Activated naive CD4-positive, alpha-beta T cell treated with anti-CD3 and anti-CD28 coated beads, Interleukin-2, amount 10 ng/mL, durations not matched to agents 7 days and 5 days (primary cell): ENCODE measurements at regions of chr20 and their contacts with region 1.

Region 1: DNA sequence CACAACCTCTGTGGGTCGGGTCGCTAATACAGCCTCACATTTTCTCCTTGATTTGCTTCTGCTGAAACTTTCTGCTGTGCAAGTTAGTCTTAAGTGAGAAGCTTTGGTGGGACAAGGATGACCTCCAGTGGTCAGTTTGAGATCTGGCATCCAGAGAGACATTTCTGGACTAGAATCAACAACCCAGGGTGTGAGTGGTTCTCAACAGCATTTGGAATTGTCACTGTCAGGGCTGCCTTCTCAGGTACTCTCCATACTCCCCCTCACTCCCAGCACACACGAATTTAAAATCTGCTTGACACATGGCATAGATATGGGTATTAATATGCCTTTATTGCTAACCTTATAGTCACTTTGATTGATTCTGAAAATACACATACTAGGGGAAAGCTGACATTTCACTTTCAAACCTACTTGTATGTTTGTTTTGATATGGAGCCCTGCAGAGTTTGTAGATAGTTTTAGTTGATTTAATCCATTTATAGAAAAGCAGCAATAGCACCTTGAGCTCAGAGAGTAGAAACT is 13.2 kb downstream of the OTOR start:
- DNase-seq: peak; percentile 64
- H3K4me3 Mint-ChIP-seq: no peak overlapping the region
- H3K27ac Mint-ChIP-seq: no peak overlapping the region
- H3K4me1 Mint-ChIP-seq: no peaks in the 10 kb centered on the region
- H3K27me3 Mint-ChIP-seq: peaks cover 20% of the 10 kb centered on the region

Region 2: GRCh38 chr20:16699293-16699692 is 62.1 kb before region 1 on chr20:
- CTCF ChIA-PET with region 1: interaction called, 11 read pairs
- DNase-seq: no peak
- H3K4me3 Mint-ChIP-seq: no peak overlapping the region
- H3K27ac Mint-ChIP-seq: no peak overlapping the region
- H3K4me1 Mint-ChIP-seq: no peaks in the 10 kb centered on the region
- H3K27me3 Mint-ChIP-seq: peaks cover 8% of the 10 kb centered on the region

Region 3: GRCh38 chr20:16785221-16785620 is 23.9 kb after region 1 on chr20:
- CTCF ChIA-PET with region 1: no interaction called
- DNase-seq: no peak
- H3K4me3 Mint-ChIP-seq: no peak overlapping the region
- H3K27ac Mint-ChIP-seq: no peak overlapping the region
- H3K4me1 Mint-ChIP-seq: no peaks in the 10 kb centered on the region
- H3K27me3 Mint-ChIP-seq: no peaks in the 10 kb centered on the region